ENCODE measurements at regions of chr15 and their contacts with region 1.

Region 1: GRCh38 chr15:92077353-92078085 is 224.0 kb downstream of the SLCO3A1 start:
- DNase-seq: peak; percentile 79
- H3K4me3 Mint-ChIP-seq: no peak overlapping the region
- H3K27ac Mint-ChIP-seq: no peak overlapping the region
- H3K4me1 Mint-ChIP-seq: peaks cover 6% of the 10 kb centered on the region
- H3K27me3 Mint-ChIP-seq: no peaks in the 10 kb centered on the region
- CTCF ChIP-seq: peak; percentile 83

Region 2: DNA sequence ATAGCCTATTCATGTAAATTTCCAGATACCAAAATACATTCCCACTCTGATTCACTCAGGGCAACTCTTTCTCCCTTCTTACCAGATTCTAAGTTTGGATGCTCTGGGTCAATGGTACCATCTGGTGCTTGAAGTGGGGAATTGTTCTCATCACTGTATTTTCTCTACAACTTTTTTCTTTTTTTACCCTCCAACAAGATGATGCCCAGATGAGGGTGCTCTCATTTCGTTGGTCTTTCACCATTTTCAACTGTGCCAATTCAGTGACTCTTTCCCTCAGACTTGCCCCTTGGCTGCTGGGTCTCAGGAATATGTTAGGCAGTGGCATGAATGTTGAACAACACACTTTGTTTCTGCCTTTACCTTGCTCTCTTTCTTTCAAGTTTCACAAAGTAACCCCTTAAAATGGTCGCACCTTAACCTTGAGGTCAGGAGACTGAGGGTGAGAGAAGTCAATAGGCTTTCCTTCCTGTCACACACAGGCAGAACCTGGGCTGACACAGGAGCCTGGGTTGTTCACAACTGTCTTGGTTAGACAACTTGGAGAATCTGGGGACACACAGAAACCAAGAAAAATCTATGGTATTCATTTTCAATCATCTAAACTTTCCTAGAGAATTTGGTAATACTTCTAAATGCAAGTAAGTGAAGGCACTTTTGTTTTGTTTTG is 554.7 kb before region 1 on chr15:
- CTCF ChIA-PET with region 1: interaction called, 4 read pairs
- POLR2A ChIA-PET with region 1: no interaction called
- intact Hi-C with region 1: loop called (anchors 1 kb)
- DNase-seq: peak; percentile 56
- H3K4me3 Mint-ChIP-seq: no peak overlapping the region
- H3K27ac Mint-ChIP-seq: no peak overlapping the region
- H3K4me1 Mint-ChIP-seq: peaks cover 13% of the 10 kb centered on the region
- H3K27me3 Mint-ChIP-seq: no peaks in the 10 kb centered on the region
- CTCF ChIP-seq: peak; percentile 43

Region 3: DNA sequence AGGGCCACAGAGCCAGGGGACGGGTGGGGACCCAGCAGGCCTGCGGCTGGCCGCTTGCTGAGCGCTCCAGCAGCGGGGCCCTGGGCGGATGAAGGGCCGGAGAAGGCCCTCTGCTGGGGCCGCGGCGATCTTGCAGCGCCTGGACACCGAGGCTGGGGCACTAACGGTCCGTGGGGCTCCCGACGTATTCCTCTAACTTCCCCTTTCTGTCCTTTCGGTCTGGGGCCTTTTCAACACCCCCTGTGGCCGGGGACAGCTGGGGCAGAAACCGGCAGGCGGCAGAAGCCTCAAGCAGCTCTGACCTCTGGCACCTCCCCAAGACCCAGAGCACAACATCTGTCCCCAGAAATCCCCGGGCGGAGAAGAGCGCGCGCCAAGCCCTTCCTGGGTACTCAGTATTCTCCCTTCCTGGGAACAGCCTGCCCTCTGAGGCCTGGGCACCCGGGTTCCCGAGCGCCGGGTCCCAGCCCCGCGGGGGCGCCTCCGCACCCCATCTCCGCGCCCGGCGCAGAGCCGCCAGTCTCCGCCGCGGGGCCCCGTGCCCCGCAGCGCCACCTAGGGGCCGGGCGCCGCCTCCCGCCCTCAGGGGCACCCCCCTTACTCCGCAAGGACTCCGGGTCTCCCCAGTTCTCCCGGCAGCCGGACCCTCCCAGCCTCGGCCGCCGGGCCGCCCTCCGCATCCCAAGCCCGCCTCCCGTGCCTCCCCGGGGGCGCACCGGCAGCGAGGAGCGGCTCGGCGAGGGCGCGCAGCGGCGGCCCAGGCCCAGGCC is 224.6 kb before region 1 on chr15:
- CTCF ChIA-PET with region 1: interaction called, 56 read pairs
- POLR2A ChIA-PET with region 1: interaction called, 5 read pairs
- intact Hi-C with region 1: loop called (anchors 1 kb)
- DNase-seq: peak; percentile 66
- H3K4me3 Mint-ChIP-seq: peak overlapping the region; percentile 75
- H3K27ac Mint-ChIP-seq: peak overlapping the region; percentile 61
- H3K4me1 Mint-ChIP-seq: peaks cover 42% of the 10 kb centered on the region
- H3K27me3 Mint-ChIP-seq: no peaks in the 10 kb centered on the region
- CTCF ChIP-seq: peak; percentile 78

Region 4: GRCh38 chr15:91981821-91982801 is 95.4 kb before region 1 on chr15:
- CTCF ChIA-PET with region 1: interaction called, 29 read pairs
- POLR2A ChIA-PET with region 1: no interaction called
- intact Hi-C with region 1: no loop called
- DNase-seq: peak; percentile 13
- H3K4me3 Mint-ChIP-seq: no peak overlapping the region
- H3K27ac Mint-ChIP-seq: no peak overlapping the region
- H3K4me1 Mint-ChIP-seq: peaks cover 6% of the 10 kb centered on the region
- H3K27me3 Mint-ChIP-seq: no peaks in the 10 kb centered on the region
- CTCF ChIP-seq: peak; percentile 21

Region 5: GRCh38 chr15:92029761-92030160 is 47.8 kb before region 1 on chr15:
- CTCF ChIA-PET with region 1: no interaction called
- POLR2A ChIA-PET with region 1: no interaction called
- intact Hi-C with region 1: no loop called
- DNase-seq: no peak
- H3K4me3 Mint-ChIP-seq: no peak overlapping the region
- H3K27ac Mint-ChIP-seq: no peak overlapping the region
- H3K4me1 Mint-ChIP-seq: peaks cover 6% of the 10 kb centered on the region
- H3K27me3 Mint-ChIP-seq: no peaks in the 10 kb centered on the region
- CTCF ChIP-seq: no peak

Region 6: GRCh38 chr15:92091155-92091734 is 13.7 kb after region 1 on chr15:
- CTCF ChIA-PET with region 1: interaction called, 34 read pairs
- POLR2A ChIA-PET with region 1: no interaction called
- intact Hi-C with region 1: no loop called
- DNase-seq: peak; percentile 61
- H3K4me3 Mint-ChIP-seq: no peak overlapping the region
- H3K27ac Mint-ChIP-seq: no peak overlapping the region
- H3K4me1 Mint-ChIP-seq: no peaks in the 10 kb centered on the region
- H3K27me3 Mint-ChIP-seq: no peaks in the 10 kb centered on the region
- CTCF ChIP-seq: peak; percentile 46